ENCODE measurements at regions of chr21 and their contacts with region 1.

Region 1: DNA sequence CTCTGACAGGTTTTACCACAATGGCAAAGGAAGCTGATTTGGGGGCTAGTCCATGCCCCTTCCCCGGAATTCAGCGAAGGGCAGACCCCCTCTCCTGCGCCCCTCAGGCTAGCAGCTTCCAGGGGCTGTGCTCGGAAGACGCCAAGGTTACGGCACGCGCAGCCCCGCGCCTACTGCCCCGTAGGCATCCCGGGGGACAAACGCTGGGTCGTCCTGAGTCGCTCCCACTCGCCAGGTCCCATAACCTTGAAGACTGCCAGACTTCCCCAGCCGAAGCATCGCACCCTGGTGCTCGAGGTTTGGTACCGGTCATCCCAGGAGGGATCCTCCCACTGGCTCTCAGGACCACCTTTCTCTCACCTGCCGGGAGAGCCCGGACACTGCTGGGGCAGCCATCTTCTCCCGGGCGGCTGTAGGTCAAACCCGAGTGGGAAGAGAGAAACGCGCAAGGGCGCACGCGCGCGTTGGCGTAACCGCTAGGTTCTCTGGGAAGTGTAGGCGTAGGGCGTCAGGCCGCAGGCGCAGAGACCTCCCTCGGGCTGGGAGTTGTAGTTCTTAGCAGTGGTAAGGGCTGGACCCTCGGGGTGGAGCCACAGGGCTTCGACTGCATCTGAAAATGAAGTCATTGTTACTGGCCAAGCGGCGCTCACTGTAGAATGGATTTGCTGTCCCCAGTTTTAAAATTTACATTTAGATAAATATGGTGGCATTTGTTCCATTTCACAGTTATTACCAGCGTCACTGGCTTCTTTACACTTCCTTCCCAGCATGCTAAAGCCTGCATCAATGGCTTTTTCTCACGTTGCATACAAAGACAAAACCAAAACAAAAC is at the start of gene ATP5PO:
- DNase-seq: peak; percentile 91
- H3K4me3 ChIP-seq: peak within 1 kb of the TSS; percentile 72
- H3K27me3 ChIP-seq: no peaks in the 10 kb centered on the region
- CTCF ChIP-seq: no peak
- polyA plus RNA-seq, gene ATP5PO: 177 and 262 TPM in 2 replicates

Region 2: DNA sequence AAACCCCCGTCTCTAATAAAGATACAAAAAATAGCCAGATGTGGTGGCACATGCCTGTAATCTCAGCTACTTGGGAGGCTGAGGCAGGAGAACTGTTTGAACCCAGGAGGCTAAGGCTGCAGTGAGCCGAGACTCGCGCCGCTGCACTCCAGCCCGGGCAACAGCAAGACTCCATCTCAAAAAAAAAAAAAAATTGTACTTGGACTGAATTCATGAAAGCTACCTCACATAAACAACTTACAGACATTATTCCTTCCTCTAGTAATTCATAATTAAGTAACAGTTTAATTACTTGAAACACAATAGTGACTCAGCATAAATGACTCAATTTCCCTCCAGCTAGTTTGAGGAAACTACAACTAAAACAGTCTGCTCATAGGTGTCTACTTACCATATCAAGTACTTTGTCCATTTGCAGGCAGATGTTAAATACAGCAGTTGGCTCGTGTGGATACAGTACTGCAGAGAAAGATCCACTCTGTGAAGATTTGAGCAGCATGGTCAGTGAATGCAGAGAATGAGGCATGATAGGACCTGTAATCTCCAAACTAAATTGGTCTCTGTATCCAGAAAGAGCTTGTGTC is 336.5 kb before region 1 on chr21:
- CTCF ChIA-PET with region 1: no interaction called
- POLR2A ChIA-PET with region 1: no interaction called
- DNase-seq: peak; percentile 55
- H3K4me3 ChIP-seq: no peak overlapping the region
- H3K27me3 ChIP-seq: no peaks in the 10 kb centered on the region
- CTCF ChIP-seq: no peak

Region 3: DNA sequence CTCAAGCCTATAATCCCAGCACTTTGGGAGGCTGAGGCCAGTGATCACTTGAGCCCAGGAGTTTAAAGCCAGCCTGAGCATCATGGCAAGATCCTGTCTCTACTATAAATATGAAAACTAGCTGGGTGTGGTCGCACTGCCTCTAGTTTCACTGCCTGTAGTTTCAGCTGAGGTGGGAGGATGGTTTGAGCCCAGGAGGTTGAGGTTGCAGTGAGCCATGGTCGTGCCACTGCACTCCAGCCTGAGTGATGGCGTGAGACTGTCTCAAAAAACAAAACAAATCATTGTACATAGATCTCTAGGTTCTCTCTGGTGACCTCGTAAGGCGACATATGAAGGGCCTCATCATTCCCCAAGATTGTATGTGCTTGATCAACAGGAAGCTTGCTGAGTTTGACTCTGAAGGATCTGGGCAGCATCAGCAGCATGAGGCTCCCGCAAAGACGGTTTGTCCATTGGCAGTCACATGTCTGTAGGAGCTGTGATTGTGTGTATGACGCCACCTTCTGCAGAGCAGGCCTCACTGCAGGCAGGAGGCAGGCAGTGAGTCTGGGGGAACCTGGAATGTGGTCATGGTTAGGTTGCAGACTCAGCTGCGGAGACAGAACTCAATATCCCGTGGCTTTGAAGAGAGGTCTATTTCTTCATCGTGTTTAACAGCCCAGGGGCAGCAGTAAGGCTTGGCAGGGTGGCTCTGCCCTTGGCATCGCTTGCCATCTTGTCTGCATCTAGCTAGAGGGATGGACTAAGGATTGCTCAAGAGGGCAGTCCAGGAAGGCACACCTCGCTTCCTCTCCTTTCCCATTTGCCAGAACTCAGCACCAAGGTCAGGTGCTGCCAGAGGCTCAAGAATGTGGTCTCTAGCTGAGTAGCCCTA is 13.9 kb before region 1 on chr21:
- CTCF ChIA-PET with region 1: interaction called, 12 read pairs
- POLR2A ChIA-PET with region 1: no interaction called
- DNase-seq: no peak
- H3K4me3 ChIP-seq: no peak overlapping the region
- H3K27me3 ChIP-seq: no peaks in the 10 kb centered on the region
- CTCF ChIP-seq: peak; percentile 67

Region 4: GRCh38 chr21:34345091-34345871 is 429.7 kb after region 1 on chr21:
- CTCF ChIA-PET with region 1: interaction called, 29 read pairs
- POLR2A ChIA-PET with region 1: no interaction called
- DNase-seq: peak; percentile 44
- H3K4me3 ChIP-seq: no peak overlapping the region
- H3K27me3 ChIP-seq: peaks cover 3% of the 10 kb centered on the region
- CTCF ChIP-seq: no peak

Measured in BJ (cell line).